ENCODE measurements at regions of chr6 and their contacts with region 1.

Region 1: GRCh38 chr6:46521464-46521971 is 30.3 kb upstream of the RCAN2 start:
- DNase-seq: no peak
- ATAC-seq: no peak

Region 2: GRCh38 chr6:46539866-46540265 is 18.3 kb after region 1 on chr6:
- intact Hi-C with region 1: no loop called
- DNase-seq: no peak
- ATAC-seq: no peak

Region 3: GRCh38 chr6:46583081-46583480 is 61.6 kb after region 1 on chr6:
- intact Hi-C with region 1: loop called (anchors 5 kb)
- DNase-seq: no peak
- ATAC-seq: no peak

Measured in Right ventricle myocardium inferior (tissue), 1 donor.